Posterior cingulate gyrus (tissue), 11 donors: ENCODE measurements at regions of chr5 and their contacts with region 1.

Region 1: GRCh38 chr5:135944967-135945560 is 9.7 kb downstream of the LECT2 start:
- DNase-seq: peak in 3 of 10 donors; percentile 20 to 37 (median 25)

Region 2: DNA sequence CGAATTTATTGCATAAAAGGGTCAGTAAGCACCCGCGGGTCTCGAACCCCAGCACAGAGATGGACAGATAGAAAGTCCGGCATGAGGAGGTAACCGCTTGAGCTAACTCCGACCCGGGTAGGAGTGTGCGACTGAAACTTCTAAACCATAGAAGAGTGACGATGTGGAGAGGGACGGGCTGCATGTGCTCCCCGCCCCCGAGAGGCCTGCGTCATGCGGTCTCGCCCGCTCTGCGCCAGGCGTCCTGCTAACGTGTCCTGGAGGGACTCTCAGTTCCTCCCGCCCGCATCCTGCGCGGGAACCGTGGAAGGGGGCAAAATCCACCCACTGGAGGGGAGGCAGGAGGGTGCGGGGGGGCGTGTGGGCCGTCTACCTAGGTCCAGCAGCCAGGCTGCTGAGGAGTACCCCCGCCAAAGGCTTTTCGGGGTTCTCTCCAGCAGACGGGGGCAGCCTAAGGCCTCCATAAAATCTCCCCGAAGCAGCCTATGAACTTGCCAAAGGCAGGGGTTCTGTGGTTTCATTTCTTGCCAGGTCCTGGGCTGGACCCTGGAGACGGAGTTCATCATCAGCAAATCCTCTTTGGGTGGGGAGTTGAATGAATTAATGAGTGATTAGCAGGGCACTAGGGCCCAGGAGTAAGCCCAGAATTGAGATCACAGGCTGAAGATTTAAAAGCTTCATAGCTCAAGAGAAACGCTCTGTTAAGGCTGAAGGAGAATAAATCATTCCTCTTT is 135.6 kb after region 1 on chr5:
- intact Hi-C with region 1: loop called (anchors 10 kb)
- DNase-seq: peak; percentile 32 to 93 (median 49)

Region 3: DNA sequence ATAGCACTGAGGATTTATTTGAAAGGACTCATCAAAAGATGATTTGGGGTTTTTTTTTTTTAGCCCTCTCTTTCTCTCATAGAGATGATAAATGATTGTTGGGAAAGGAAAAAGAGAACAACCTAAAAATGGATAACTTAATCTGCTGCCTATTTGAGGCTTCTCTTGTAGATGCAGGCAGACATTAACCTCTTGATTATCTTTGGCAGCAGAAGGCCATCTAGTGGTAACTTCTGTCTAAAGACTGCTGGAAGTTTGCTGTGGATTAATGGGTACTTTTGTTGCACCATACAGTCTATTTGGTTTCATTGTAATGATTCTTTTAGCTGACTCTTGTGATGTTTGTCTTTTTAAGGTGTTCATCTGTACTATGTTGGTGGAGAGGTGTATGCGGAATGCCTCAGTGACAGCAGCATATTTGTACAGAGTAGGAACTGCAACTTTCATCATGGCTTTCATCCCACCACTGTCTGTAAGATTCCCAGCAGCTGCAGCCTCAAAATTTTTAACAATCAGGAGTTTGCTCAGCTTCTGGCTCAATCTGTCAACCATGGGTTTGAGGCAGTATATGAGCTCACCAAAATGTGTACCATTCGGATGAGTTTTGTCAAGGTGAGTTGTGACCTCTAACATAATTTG is 229.1 kb after region 1 on chr5:
- intact Hi-C with region 1: loop called (anchors 1 kb)
- DNase-seq: no peak

Region 4: GRCh38 chr5:136212252-136212721 is 267.2 kb after region 1 on chr5:
- intact Hi-C with region 1: loop called (anchors 1 kb)
- DNase-seq: peak in 7 of 10 donors; percentile 44 to 92 (median 52)